Caco-2 (cell line): ENCODE measurements at regions of chr14 and their contacts with region 1.

Region 1: GRCh38 chr14:105490572-105491366 is at the start of gene TEDC1:
- DNase-seq: peak; percentile 99 to 100
- H3K4me3 ChIP-seq: peak within 1 kb of the TSS; percentile 83
- H3K4me3 Mint-ChIP-seq: peak within 1 kb of the TSS; percentile 79
- H3K27ac Mint-ChIP-seq: peak within 1 kb of the TSS; percentile 87
- H3K4me1 ChIP-seq: peaks cover 32% of the 10 kb centered on the region
- H3K4me1 Mint-ChIP-seq: no peaks in the 10 kb centered on the region
- H3K27me3 ChIP-seq: no peaks in the 10 kb centered on the region
- H3K27me3 Mint-ChIP-seq: no peaks in the 10 kb centered on the region
- CTCF ChIP-seq: peak; percentile 54 to 67
- total RNA-seq, gene TEDC1: 30.3 and 30.8 TPM in 2 replicates

Region 2: GRCh38 chr14:104976198-104977007 is 514.4 kb before region 1 on chr14:
- CTCF ChIA-PET with region 1: no interaction called
- POLR2A ChIA-PET with region 1: no interaction called
- intact Hi-C with region 1: loop called (anchors 5 kb)
- DNase-seq: peak; percentile 85 to 91
- H3K4me3 ChIP-seq: no peak overlapping the region
- H3K4me3 Mint-ChIP-seq: peak overlapping the region; percentile 59
- H3K27ac Mint-ChIP-seq: no peak overlapping the region
- H3K4me1 ChIP-seq: peaks cover 13% of the 10 kb centered on the region
- H3K4me1 Mint-ChIP-seq: peaks cover 7% of the 10 kb centered on the region
- H3K27me3 ChIP-seq: no peaks in the 10 kb centered on the region
- H3K27me3 Mint-ChIP-seq: peaks cover 2% of the 10 kb centered on the region
- CTCF ChIP-seq: peak; percentile 87 to 96

Region 3: DNA sequence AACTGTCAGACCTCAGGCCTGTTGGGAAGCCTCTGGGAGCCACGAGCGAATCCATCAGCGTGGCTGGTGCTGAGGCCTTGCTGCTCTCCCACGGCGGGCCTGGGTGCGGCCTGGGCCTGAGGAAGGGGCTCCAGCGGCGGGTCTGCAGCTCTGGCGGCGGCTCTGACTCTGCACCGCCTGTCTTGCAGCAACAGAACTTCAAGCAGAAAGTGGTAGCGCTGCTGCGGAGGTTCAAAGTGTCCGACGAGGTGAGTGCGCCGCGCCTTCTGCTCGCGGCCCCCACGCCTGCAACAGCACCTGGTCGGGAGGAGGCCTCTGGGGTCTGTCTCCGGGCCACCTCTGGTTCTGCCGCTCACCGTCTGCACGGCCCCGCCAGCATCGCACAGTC is 121.1 kb before region 1 on chr14:
- CTCF ChIA-PET with region 1: interaction called, 31 read pairs
- POLR2A ChIA-PET with region 1: no interaction called
- intact Hi-C with region 1: loop called (anchors 2 kb)
- DNase-seq: no peak
- H3K4me3 ChIP-seq: no peak overlapping the region
- H3K4me3 Mint-ChIP-seq: no peak overlapping the region
- H3K27ac Mint-ChIP-seq: no peak overlapping the region
- H3K4me1 ChIP-seq: no peaks in the 10 kb centered on the region
- H3K4me1 Mint-ChIP-seq: no peaks in the 10 kb centered on the region
- H3K27me3 ChIP-seq: no peaks in the 10 kb centered on the region
- H3K27me3 Mint-ChIP-seq: no peaks in the 10 kb centered on the region
- CTCF ChIP-seq: no peak

Region 4: DNA sequence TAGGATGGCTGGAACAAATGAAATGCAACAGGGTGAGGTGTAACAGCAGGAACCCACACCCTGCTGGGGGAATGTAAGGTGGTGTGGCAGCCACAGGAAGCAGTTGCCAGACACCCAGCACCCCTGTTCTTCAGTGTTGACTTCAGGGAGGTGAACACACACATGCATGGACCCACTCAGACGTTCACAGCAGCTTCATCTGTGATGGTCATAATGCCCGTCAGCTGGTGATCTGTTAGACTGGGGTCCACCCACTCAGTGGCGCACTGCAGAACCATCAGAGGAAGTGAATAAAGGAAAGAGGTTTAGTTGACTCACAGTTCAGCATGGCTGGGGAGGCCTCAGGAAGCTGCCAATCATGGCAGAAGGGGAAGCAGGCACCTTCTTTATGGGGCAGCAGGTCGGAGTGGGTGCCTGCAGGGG is 115.1 kb before region 1 on chr14:
- CTCF ChIA-PET with region 1: interaction called, 31 read pairs
- POLR2A ChIA-PET with region 1: no interaction called
- intact Hi-C with region 1: loop called (anchors 2 kb)
- DNase-seq: no peak
- H3K4me3 ChIP-seq: no peak overlapping the region
- H3K4me3 Mint-ChIP-seq: no peak overlapping the region
- H3K27ac Mint-ChIP-seq: no peak overlapping the region
- H3K4me1 ChIP-seq: no peaks in the 10 kb centered on the region
- H3K4me1 Mint-ChIP-seq: no peaks in the 10 kb centered on the region
- H3K27me3 ChIP-seq: no peaks in the 10 kb centered on the region
- H3K27me3 Mint-ChIP-seq: no peaks in the 10 kb centered on the region
- CTCF ChIP-seq: no peak

Region 5: DNA sequence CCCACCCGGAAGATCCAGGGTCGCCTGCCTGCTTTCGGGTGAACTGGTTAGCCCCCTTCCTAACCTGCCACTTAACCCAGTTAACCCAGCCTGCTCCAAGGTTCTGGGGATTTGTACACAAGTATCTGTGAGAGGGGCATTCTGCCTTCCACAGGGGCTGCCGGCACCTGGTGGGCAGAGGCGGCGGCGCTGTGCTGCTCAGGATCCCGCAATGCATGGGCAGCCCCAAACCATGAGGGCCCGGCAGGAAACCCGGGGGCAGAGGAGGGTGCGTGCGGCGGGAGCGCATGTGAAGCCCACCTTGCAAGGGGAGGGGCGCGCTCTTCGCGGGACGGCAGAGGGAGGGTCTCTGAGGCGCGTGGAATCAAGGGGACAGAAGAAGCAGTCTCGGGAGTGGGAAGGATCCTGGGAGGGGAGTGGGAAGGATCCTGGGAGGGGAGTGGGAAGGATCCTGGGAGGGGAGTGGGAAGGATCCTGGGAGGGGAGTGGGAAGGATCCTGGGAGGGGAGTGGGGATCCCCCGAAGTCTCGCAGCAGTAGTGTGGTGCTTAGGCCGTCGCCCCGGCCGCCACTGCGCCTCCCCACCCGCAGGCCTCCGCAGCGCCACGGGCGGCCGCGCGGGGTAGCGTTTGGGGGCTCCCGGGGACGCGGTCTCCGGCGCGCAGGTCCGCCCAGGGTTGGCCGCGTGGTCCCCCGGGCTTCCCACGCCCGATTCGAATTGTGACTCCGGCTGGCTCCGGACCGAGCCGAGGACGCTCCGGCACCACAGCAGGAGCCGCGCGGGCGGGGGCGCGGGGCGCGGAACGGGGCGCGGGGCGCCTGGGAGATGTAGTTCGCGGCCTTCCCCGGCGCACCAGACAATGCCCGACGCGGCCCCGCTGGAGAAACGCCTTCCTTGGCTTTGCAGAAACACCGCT is 76.1 kb before region 1 on chr14:
- CTCF ChIA-PET with region 1: interaction called, 4 read pairs
- POLR2A ChIA-PET with region 1: no interaction called
- intact Hi-C with region 1: loop called (anchors 1 kb)
- DNase-seq: peak; percentile 62 to 77
- H3K4me3 ChIP-seq: peak overlapping the region; percentile 39
- H3K4me3 Mint-ChIP-seq: peak overlapping the region; percentile 59
- H3K27ac Mint-ChIP-seq: no peak overlapping the region
- H3K4me1 ChIP-seq: peaks cover 22% of the 10 kb centered on the region
- H3K4me1 Mint-ChIP-seq: peaks cover 10% of the 10 kb centered on the region
- H3K27me3 ChIP-seq: no peaks in the 10 kb centered on the region
- H3K27me3 Mint-ChIP-seq: peaks cover 2% of the 10 kb centered on the region
- CTCF ChIP-seq: peak; percentile 49 to 65

Region 6: DNA sequence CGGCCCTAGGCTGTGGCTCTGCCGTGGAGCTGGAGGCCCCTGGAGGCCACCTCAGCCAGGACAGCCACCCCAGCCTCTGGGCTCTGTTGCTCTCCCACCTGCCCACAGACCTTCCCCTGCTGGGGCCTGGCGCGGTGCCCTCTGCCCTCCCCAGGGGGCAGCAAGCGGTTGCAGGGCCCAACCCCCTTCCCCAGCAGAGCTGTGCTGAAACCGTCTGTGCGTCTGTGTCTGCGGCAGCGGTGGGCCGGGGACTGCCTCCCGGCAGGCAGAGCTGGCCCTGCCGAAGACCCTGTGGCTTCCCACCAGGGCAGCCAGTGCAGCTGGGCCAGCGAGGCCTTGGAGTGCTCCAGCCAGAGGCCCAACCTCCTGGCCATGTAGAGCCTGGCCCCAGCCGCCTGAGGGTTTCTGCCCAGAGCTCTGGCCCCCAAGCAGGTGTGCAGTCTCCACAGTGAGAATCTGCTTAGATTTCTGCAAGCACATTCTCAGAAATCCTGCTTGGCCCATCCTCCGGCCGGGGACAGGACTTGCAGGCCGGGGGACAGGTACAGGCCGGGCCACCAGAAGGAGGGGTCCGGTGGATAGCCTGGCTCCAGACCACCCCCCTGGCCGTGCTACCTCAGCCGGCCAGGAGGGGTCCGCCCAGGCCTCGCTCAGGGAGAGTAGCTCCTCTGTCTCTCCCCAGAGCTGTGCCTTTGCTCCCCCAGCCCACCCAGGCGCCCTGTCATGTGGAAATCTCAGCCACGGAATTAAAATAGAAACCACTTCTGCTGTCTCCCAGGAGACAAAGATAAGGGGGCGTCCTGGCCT is 19.8 kb before region 1 on chr14:
- CTCF ChIA-PET with region 1: interaction called, 16 read pairs
- POLR2A ChIA-PET with region 1: interaction called, 4 read pairs
- intact Hi-C with region 1: no loop called
- DNase-seq: peak in 1 of 2 experiments; percentile 47
- H3K4me3 ChIP-seq: no peak overlapping the region
- H3K4me3 Mint-ChIP-seq: no peak overlapping the region
- H3K27ac Mint-ChIP-seq: no peak overlapping the region
- H3K4me1 ChIP-seq: peaks cover 18% of the 10 kb centered on the region
- H3K4me1 Mint-ChIP-seq: no peaks in the 10 kb centered on the region
- H3K27me3 ChIP-seq: no peaks in the 10 kb centered on the region
- H3K27me3 Mint-ChIP-seq: no peaks in the 10 kb centered on the region
- CTCF ChIP-seq: peak; percentile 15 to 36

Region 7: GRCh38 chr14:105527661-105528581 is 37.2 kb after region 1 on chr14:
- CTCF ChIA-PET with region 1: interaction called, 11 read pairs
- POLR2A ChIA-PET with region 1: no interaction called
- intact Hi-C with region 1: loop called (anchors 5 kb)
- DNase-seq: peak in 1 of 2 experiments; percentile 83
- H3K4me3 ChIP-seq: peak overlapping the region; percentile 31
- H3K4me3 Mint-ChIP-seq: peak overlapping the region; percentile 62
- H3K27ac Mint-ChIP-seq: no peak overlapping the region
- H3K4me1 ChIP-seq: peaks cover 12% of the 10 kb centered on the region
- H3K4me1 Mint-ChIP-seq: no peaks in the 10 kb centered on the region
- H3K27me3 ChIP-seq: no peaks in the 10 kb centered on the region
- H3K27me3 Mint-ChIP-seq: peaks cover 7% of the 10 kb centered on the region
- CTCF ChIP-seq: peak; percentile 74 to 76

Region 8: DNA sequence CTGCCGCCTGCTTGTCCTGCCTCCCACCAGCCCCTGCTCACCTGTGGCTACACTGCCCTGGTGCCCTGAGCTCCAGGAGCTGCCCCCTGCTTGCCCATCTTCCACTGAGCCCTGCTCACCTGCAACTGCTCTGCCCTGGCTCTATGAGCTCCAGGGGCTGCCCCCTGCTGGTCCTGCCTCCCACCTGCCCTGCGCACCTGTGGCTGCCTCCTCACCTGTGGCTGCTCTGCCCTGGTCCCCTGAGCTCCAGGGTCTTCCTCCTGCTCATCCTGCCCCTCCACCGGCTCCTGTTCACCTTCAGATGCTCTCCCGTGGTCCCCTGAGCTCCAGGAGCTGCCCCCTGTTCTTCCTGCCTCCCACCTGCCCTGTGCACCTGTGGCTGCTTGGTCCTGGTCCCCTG is 283.2 kb after region 1 on chr14:
- CTCF ChIA-PET with region 1: no interaction called
- POLR2A ChIA-PET with region 1: no interaction called
- intact Hi-C with region 1: no loop called
- DNase-seq: peak in 1 of 2 experiments; percentile 17
- H3K4me3 ChIP-seq: no peak overlapping the region
- H3K4me3 Mint-ChIP-seq: no peak overlapping the region
- H3K27ac Mint-ChIP-seq: no peak overlapping the region
- H3K4me1 ChIP-seq: no peaks in the 10 kb centered on the region
- H3K4me1 Mint-ChIP-seq: no peaks in the 10 kb centered on the region
- H3K27me3 ChIP-seq: no peaks in the 10 kb centered on the region
- H3K27me3 Mint-ChIP-seq: peaks cover 15% of the 10 kb centered on the region
- CTCF ChIP-seq: peak in 1 of 2 experiments; percentile 19